Esophagus muscularis mucosa (tissue), 4 donors: ENCODE measurements at regions of chr4 and their contacts with region 1.

Region 1: GRCh38 chr4:73244945-73245601 is 13.5 kb downstream of the ANKRD17 start:
- DNase-seq: no peak
- H3K4me3 ChIP-seq: no peak overlapping the region
- H3K27ac ChIP-seq: no peak overlapping the region
- H3K4me1 ChIP-seq: peaks cover 5 to 52% (median 47%) of the 10 kb centered on the region in 4 donors
- H3K27me3 ChIP-seq: no peaks in the 10 kb centered on the region
- CTCF ChIP-seq: no peak
- EP300 ChIP-seq: no peak
- POLR2A ChIP-seq: no peak

Region 2: GRCh38 chr4:73166212-73166611 is 78.9 kb before region 1 on chr4:
- intact Hi-C with region 1: loop called (anchors 5 kb)
- DNase-seq: no peak
- H3K4me3 ChIP-seq: no peak overlapping the region
- H3K27ac ChIP-seq: no peak overlapping the region
- H3K4me1 ChIP-seq: peaks cover 5 to 16% (median 9%) of the 10 kb centered on the region in 4 donors
- H3K27me3 ChIP-seq: no peaks in the 10 kb centered on the region
- CTCF ChIP-seq: no peak
- EP300 ChIP-seq: no peak
- POLR2A ChIP-seq: no peak

Region 3: GRCh38 chr4:73308286-73308685 is 63.2 kb after region 1 on chr4:
- intact Hi-C with region 1: no loop called
- DNase-seq: no peak
- H3K4me3 ChIP-seq: no peak overlapping the region
- H3K27ac ChIP-seq: no peak overlapping the region
- H3K4me1 ChIP-seq: no peaks in the 10 kb centered on the region
- H3K27me3 ChIP-seq: no peaks in the 10 kb centered on the region
- CTCF ChIP-seq: no peak
- EP300 ChIP-seq: no peak
- POLR2A ChIP-seq: no peak